Activated T-helper 2 cell treated with anti-CD3 and anti-CD28 coated beads, Interferon-gamma antibody, Interleukin-2, Interleukin-4, amounts not matched to agents 10 μg/mL and 5 μg/mL and 100 μg/mL, durations not matched to agents 14 hours and 24 hours and 36 hours (primary cell): ENCODE measurements at regions of chr15 and their contacts with region 1.

Region 1: GRCh38 chr15:63212050-63213004 is 22.9 kb downstream of the RAB8B start:
- DNase-seq: no peak
- H3K4me3 Mint-ChIP-seq: peak overlapping the region; percentile 50
- H3K27ac Mint-ChIP-seq: peak overlapping the region; percentile 95
- H3K4me1 Mint-ChIP-seq: peaks cover 66% of the 10 kb centered on the region
- H3K27me3 Mint-ChIP-seq: no peaks in the 10 kb centered on the region

Region 2: DNA sequence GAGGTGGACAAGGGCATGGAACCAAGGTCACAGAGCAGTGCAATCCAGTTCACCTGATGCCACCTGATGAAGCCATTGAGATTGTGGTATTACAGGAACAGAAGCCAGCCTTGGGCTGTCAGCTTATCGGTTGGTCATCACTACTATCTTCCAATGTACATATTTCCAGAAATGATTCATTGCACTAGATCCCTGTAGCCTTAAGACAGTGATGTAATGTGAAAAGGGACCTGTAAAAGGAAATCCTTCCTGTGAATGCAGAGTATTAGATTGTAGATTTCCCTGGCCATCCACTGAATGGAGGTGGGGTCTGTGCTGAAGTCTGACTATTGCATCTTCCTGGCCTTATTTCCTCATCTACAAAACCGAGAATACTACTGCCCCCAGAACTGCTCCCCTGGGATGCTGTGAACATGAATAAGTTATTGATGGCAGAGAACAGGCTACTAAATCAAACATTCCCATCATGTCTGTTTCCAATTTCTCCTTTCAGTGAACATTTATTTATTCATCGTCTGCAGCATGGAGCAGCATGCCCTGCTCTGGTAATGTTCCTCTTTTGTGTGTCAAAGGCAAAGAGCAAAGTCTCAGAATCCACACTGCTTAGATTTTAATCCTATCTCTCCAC is 217.2 kb before region 1 on chr15:
- intact Hi-C with region 1: no loop called
- DNase-seq: no peak
- H3K4me3 Mint-ChIP-seq: no peak overlapping the region
- H3K27ac Mint-ChIP-seq: no peak overlapping the region
- H3K4me1 Mint-ChIP-seq: no peaks in the 10 kb centered on the region
- H3K27me3 Mint-ChIP-seq: peaks cover 6% of the 10 kb centered on the region

Region 3: GRCh38 chr15:63107895-63108546 is 104.3 kb before region 1 on chr15:
- intact Hi-C with region 1: no loop called
- DNase-seq: no peak
- H3K4me3 Mint-ChIP-seq: no peak overlapping the region
- H3K27ac Mint-ChIP-seq: no peak overlapping the region
- H3K4me1 Mint-ChIP-seq: no peaks in the 10 kb centered on the region
- H3K27me3 Mint-ChIP-seq: peaks cover 10% of the 10 kb centered on the region

Region 4: DNA sequence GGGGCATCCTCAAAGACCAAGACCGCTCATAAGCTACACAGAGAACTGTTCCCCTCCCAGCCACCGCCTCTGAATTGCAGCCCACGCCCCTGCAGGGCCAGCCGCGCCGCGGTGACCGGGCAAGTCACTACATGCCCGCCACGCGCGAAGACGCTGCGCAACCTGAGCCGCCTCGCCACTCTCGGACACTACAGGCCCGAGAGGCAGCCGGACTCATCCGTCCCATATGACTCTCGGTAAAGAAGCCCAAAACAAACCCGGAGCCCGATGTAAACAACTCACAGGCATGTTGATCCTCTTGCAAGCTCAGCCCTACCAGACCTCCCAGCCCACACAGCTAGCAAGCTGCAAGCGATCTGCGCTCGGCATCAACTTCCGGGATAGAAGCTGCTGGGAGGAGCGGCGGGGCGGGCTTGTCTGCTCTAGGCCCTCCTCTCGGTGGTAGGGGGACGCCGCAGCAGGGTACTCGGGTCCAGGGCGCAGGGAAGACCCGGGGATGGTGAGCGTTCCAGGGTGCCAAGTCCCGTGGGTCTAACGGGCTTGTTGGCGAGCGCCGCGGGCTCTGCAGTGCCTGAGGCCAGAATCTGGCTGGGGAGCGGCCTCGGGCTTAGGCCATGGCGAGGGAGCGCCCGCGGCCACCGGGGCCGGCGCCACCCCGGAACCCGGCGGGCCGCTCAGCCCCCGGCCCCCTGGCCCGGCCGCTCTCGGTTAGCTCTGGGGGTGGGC is 55.0 kb before region 1 on chr15 and contains the start of gene RPS27L:
- intact Hi-C with region 1: loop called (anchors 1 kb)
- DNase-seq: peak; percentile 87
- H3K4me3 Mint-ChIP-seq: peak within 1 kb of the TSS; percentile 97
- H3K27ac Mint-ChIP-seq: peak within 1 kb of the TSS; percentile 97
- H3K4me1 Mint-ChIP-seq: peaks cover 14% of the 10 kb centered on the region
- H3K27me3 Mint-ChIP-seq: no peaks in the 10 kb centered on the region
- total RNA-seq, gene RPS27L: 164 and 167 TPM in 2 replicates

Region 5: GRCh38 chr15:63172376-63173109 is 39.8 kb before region 1 on chr15:
- intact Hi-C with region 1: loop called (anchors 1 kb)
- DNase-seq: no peak
- H3K4me3 Mint-ChIP-seq: no peak overlapping the region
- H3K27ac Mint-ChIP-seq: no peak overlapping the region
- H3K4me1 Mint-ChIP-seq: peaks cover 9% of the 10 kb centered on the region
- H3K27me3 Mint-ChIP-seq: no peaks in the 10 kb centered on the region

Region 6: DNA sequence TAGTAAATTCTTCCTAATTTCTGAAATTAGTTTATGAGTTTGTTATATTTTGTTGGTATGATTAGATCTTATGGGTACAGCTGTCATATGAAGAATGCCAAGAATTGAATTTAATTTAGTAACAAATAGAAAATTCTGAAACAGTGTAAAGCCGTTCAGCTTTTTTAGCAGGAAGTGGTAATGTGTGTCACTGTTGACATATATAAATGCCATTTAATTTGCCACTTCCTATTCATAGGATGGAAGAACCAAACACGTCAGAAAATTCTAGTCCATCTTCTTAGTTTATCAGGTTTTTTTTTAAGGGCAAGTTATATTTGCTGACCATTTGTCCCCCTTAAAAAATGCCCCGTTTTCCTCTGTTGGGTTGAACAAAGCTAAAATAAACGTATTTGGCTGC is 20.1 kb after region 1 on chr15:
- intact Hi-C with region 1: loop called (anchors 1 kb)
- DNase-seq: no peak
- H3K4me3 Mint-ChIP-seq: peak overlapping the region; percentile 42
- H3K27ac Mint-ChIP-seq: peak overlapping the region; percentile 54
- H3K4me1 Mint-ChIP-seq: peaks cover 68% of the 10 kb centered on the region
- H3K27me3 Mint-ChIP-seq: no peaks in the 10 kb centered on the region

Region 7: GRCh38 chr15:63238796-63239195 is 26.5 kb after region 1 on chr15:
- intact Hi-C with region 1: loop called (anchors 1 kb)
- DNase-seq: no peak
- H3K4me3 Mint-ChIP-seq: no peak overlapping the region
- H3K27ac Mint-ChIP-seq: peak overlapping the region; percentile 54
- H3K4me1 Mint-ChIP-seq: peaks cover 61% of the 10 kb centered on the region
- H3K27me3 Mint-ChIP-seq: no peaks in the 10 kb centered on the region

Region 8: DNA sequence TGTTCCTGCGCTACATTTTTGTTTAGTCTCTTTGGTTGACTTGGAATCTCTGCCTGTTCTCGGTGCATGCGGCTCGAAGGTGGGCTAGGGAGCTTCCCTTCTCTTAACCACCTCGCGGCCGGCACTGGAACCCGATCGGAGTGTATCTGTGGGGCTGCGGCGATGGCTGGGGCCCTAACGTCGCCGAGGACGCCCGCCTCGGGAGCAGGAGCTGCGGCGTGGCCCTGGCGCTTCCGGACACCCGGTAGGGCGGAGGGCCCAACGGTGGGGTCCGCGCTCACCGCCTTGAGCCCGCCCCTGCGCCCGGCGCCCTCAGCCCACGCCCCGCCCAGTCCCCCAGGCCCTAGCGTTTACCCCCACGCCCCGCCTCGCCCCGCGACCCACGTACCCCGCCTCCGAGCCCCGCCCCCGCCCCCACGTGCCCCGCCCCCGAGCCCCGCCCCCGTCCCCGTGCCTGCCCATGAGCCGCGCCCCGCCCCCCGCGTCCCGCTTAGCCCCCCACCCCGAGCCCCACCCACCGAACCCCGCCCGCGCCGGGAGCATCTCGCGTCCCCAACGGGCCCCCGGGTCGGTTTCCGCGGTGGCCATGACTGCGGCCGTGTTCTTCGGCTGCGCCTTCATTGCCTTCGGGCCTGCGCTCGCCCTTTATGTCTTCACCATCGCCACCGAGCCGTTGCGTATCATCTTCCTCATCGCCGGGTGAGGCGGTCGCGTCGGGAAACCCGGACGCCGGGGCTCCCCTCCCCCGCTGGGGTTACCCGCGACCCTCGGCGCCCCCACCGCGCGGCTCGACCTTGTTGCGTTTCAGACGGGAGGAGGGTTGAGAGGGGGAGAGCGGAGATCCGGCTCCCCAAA is 64.9 kb after region 1 on chr15 and contains the start of gene APH1B:
- intact Hi-C with region 1: loop called (anchors 5 kb)
- DNase-seq: peak; percentile 77
- H3K4me3 Mint-ChIP-seq: peak within 1 kb of the TSS; percentile 87
- H3K27ac Mint-ChIP-seq: peak within 1 kb of the TSS; percentile 85
- H3K4me1 Mint-ChIP-seq: peaks cover 30% of the 10 kb centered on the region
- H3K27me3 Mint-ChIP-seq: no peaks in the 10 kb centered on the region
- total RNA-seq, gene APH1B: 9.5 and 9.8 TPM in 2 replicates

Region 9: GRCh38 chr15:63374686-63375520 is 162.6 kb after region 1 on chr15:
- intact Hi-C with region 1: loop called (anchors 5 kb)
- DNase-seq: peak; percentile 27
- H3K4me3 Mint-ChIP-seq: peak overlapping the region; percentile 9
- H3K27ac Mint-ChIP-seq: peak overlapping the region; percentile 89
- H3K4me1 Mint-ChIP-seq: peaks cover 51% of the 10 kb centered on the region
- H3K27me3 Mint-ChIP-seq: peaks cover 9% of the 10 kb centered on the region